GM12878 (cell line): ENCODE measurements at regions of chr14 and their contacts with region 1.

Region 1: GRCh38 chr14:73311708-73312030 is 74.4 kb downstream of the PAPLN start:
- DNase-seq: no peak
- ATAC-seq: peak; percentile 39
- H3K4me3 ChIP-seq: no peak overlapping the region
- H3K27ac ChIP-seq: no peak overlapping the region
- H3K4me1 ChIP-seq: no peaks in the 10 kb centered on the region
- H3K27me3 ChIP-seq: no peaks in the 10 kb centered on the region
- CTCF ChIP-seq: no peak
- EP300 ChIP-seq: no peak
- POLR2A ChIP-seq: no peak
- RAD21 ChIP-seq: no peak

Region 2: DNA sequence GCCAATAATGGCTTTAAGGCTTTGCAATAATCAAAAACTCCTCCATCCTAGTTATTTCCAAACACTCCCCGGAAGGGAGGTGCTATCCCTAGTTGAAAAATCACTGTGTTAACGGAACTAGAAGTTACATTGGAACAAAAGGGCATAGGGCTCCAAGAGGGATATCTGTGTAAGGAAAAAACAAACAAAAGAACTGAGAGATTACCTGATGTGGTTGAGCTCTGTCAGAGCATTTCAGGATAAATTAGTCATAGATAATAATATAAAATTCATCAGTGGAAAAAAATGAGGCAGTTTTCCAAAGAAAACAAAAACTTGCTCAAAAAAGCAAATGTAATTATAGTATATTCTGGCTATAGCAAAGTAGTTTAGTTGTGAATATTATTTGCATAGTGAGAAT is 101.7 kb before region 1 on chr14:
- CTCF ChIA-PET with region 1: no interaction called
- POLR2A ChIA-PET with region 1: no interaction called
- RAD21 ChIA-PET with region 1: no interaction called
- SMC1A ChIA-PET with region 1: no interaction called
- in situ Hi-C with region 1: no loop called
- intact Hi-C with region 1: no loop called
- DNase-seq: no peak
- ATAC-seq: no peak
- H3K4me3 ChIP-seq: no peak overlapping the region
- H3K27ac ChIP-seq: no peak overlapping the region
- H3K4me1 ChIP-seq: no peaks in the 10 kb centered on the region
- H3K27me3 ChIP-seq: no peaks in the 10 kb centered on the region
- CTCF ChIP-seq: no peak
- EP300 ChIP-seq: no peak
- POLR2A ChIP-seq: no peak
- RAD21 ChIP-seq: no peak

Region 3: GRCh38 chr14:73325630-73326299 is 14.1 kb after region 1 on chr14:
- CTCF ChIA-PET with region 1: interaction called, 3 read pairs
- POLR2A ChIA-PET with region 1: interaction called, 4 read pairs
- RAD21 ChIA-PET with region 1: interaction called, 7 read pairs
- SMC1A ChIA-PET with region 1: interaction called, 11 read pairs
- in situ Hi-C with region 1: no loop called
- intact Hi-C with region 1: no loop called
- DNase-seq: no peak
- ATAC-seq: no peak
- H3K4me3 ChIP-seq: no peak overlapping the region
- H3K27ac ChIP-seq: no peak overlapping the region
- H3K4me1 ChIP-seq: no peaks in the 10 kb centered on the region
- H3K27me3 ChIP-seq: no peaks in the 10 kb centered on the region
- CTCF ChIP-seq: no peak
- EP300 ChIP-seq: no peak
- POLR2A ChIP-seq: no peak
- RAD21 ChIP-seq: no peak

Region 4: DNA sequence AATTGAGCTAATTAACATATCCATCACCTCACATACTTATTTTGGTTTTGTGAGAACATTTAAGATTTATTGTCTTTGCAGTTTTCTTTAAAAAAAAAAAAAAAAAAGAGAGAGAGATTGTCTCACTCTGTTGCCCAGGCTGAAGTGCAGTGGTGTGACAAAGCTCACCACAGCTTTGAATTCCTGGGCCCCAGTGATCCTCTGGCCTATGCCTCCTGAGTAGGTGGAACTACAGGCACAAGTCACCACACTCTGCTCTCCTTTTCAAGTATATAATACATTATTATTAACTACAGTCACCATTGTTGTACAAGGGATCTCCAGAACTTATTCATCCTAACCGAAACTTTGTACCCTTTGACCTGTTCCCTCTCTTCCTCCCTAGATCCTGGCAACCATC is 82.6 kb after region 1 on chr14:
- CTCF ChIA-PET with region 1: no interaction called
- POLR2A ChIA-PET with region 1: no interaction called
- RAD21 ChIA-PET with region 1: no interaction called
- SMC1A ChIA-PET with region 1: no interaction called
- in situ Hi-C with region 1: no loop called
- intact Hi-C with region 1: no loop called
- DNase-seq: no peak
- ATAC-seq: peak; percentile 49
- H3K4me3 ChIP-seq: no peak overlapping the region
- H3K27ac ChIP-seq: no peak overlapping the region
- H3K4me1 ChIP-seq: peaks cover 16% of the 10 kb centered on the region
- H3K27me3 ChIP-seq: no peaks in the 10 kb centered on the region
- CTCF ChIP-seq: no peak
- EP300 ChIP-seq: no peak
- POLR2A ChIP-seq: no peak
- RAD21 ChIP-seq: no peak